ENCODE measurements at regions of chr5 and their contacts with region 1.

Region 1: GRCh38 chr5:39148983-39149534 is 70.3 kb downstream of the FYB1 start:
- DNase-seq: no peak
- H3K4me3 Mint-ChIP-seq: no peak overlapping the region
- H3K27ac Mint-ChIP-seq: peak overlapping the region; percentile 65
- H3K4me1 Mint-ChIP-seq: peaks cover 78% of the 10 kb centered on the region
- H3K27me3 Mint-ChIP-seq: no peaks in the 10 kb centered on the region

Region 2: DNA sequence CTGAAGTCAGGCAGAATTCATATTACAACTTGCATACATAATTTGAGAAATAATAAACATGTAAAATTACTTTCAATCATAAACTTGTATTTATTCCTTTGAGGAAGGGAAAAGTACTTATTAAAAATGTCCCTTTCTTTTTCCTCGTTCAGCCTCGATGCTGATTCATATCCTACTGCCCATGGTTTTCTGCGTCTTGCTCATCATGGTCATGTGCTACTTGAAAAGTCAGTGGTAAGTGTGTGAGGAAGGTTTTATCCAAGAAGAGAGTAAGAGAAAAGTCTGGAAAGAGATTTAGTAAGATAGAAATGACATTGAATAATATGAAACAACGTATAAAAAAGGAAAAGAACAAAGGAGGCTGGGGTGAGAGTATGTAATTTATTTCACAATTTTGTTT is 217.3 kb before region 1 on chr5:
- CTCF ChIA-PET with region 1: no interaction called
- intact Hi-C with region 1: no loop called
- DNase-seq: no peak
- H3K4me3 Mint-ChIP-seq: no peak overlapping the region
- H3K27ac Mint-ChIP-seq: no peak overlapping the region
- H3K4me1 Mint-ChIP-seq: no peaks in the 10 kb centered on the region
- H3K27me3 Mint-ChIP-seq: peaks cover 3% of the 10 kb centered on the region

Region 3: GRCh38 chr5:39138892-39139291 is 10.2 kb before region 1 on chr5:
- CTCF ChIA-PET with region 1: interaction called, 6 read pairs
- intact Hi-C with region 1: loop called (anchors 1 kb)
- DNase-seq: no peak
- H3K4me3 Mint-ChIP-seq: no peak overlapping the region
- H3K27ac Mint-ChIP-seq: no peak overlapping the region
- H3K4me1 Mint-ChIP-seq: peaks cover 23% of the 10 kb centered on the region
- H3K27me3 Mint-ChIP-seq: no peaks in the 10 kb centered on the region

Region 4: DNA sequence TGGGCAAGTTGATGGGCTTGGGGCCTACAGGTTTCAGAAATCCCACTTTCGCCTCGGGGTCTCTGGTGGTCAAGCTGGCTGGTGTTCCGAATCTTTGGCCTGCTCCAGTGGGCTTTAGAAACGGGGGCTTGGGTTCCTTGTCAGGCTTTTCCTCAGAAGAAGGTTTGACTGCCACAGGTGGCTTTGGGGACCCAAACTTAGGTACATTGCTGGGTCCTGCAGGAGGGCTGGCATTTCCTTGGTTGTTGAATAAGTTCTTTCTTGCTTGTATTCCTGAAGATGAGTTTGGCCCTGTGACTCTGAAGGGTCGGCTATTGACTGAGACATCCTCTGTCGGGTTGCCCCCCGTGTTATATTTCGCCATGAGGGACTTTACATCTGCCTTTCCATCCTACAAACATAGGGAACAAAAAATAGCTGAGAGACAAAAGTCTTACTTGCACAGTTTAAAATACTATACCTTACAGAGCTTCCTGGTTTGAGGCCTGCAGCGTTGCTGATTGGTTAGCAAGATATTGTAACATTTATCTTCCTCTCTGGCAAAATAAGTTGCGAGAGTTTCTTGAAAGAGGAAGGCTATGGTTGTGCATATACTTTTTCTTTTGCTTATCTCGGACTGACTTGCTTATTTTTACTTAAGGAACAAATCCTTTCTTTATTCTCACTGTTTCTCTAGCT is 53.7 kb after region 1 on chr5:
- CTCF ChIA-PET with region 1: interaction called, 5 read pairs
- intact Hi-C with region 1: loop called (anchors 1 kb)
- DNase-seq: peak; percentile 55
- H3K4me3 Mint-ChIP-seq: peak overlapping the region; percentile 83
- H3K27ac Mint-ChIP-seq: peak overlapping the region; percentile 99
- H3K4me1 Mint-ChIP-seq: peaks cover 37% of the 10 kb centered on the region
- H3K27me3 Mint-ChIP-seq: no peaks in the 10 kb centered on the region

Region 5: GRCh38 chr5:39547553-39548154 is 398.6 kb after region 1 on chr5:
- CTCF ChIA-PET with region 1: no interaction called
- intact Hi-C with region 1: loop called (anchors 2 kb)
- DNase-seq: peak; percentile 20
- H3K4me3 Mint-ChIP-seq: no peak overlapping the region
- H3K27ac Mint-ChIP-seq: no peak overlapping the region
- H3K4me1 Mint-ChIP-seq: peaks cover 2% of the 10 kb centered on the region
- H3K27me3 Mint-ChIP-seq: no peaks in the 10 kb centered on the region

Measured in activated naive CD4-positive, alpha-beta T cell treated with anti-CD3 and anti-CD28 coated beads for 36 hours (primary cell).